HEK293 (cell line): ENCODE measurements at regions of chr11 and their contacts with region 1.

Region 1: GRCh38 chr11:61384271-61385242 is 7.8 kb upstream of the TMEM216 start:
- H3K4me3 ChIP-seq: no peak overlapping the region
- H3K27ac ChIP-seq: no peak overlapping the region
- H3K4me1 ChIP-seq: no peaks in the 10 kb centered on the region
- CTCF ChIP-seq: no peak

Region 2: GRCh38 chr11:61254403-61255025 is 130.0 kb before region 1 on chr11:
- CTCF ChIA-PET with region 1: interaction called, 31 read pairs
- POLR2A ChIA-PET with region 1: no interaction called
- H3K4me3 ChIP-seq: no peak overlapping the region
- H3K27ac ChIP-seq: no peak overlapping the region
- H3K4me1 ChIP-seq: no peaks in the 10 kb centered on the region
- CTCF ChIP-seq: peak; percentile 59

Region 3: DNA sequence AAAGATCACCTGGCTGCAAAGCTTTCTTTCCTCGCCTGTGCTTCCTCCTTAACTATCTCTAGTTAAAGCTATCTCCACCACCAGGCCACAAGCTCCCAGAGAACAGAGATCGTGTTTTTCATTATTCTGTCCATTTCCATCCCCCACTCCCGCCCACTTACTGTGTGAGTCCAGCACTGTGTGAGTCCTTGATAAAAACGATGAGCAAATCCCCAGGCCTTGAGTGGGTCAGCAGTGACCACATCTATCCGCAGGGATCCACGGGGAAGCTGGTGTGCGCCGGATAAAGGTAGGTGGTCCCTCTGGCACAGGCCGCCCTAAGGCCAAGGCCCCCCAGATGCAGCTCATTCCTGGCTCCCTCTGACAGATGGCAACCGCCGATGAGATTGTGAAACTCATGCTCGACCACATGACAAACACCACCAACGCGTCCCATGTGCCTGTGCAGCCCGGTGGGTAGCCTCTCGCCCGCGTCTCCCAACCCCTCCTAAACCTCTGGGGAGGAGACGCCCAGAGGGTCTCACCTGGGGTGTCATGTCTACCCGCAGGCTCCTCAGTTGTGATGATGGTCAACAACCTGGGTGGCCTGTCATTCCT is 42.3 kb before region 1 on chr11:
- CTCF ChIA-PET with region 1: interaction called, 210 read pairs
- POLR2A ChIA-PET with region 1: no interaction called
- H3K4me3 ChIP-seq: no peak overlapping the region
- H3K27ac ChIP-seq: no peak overlapping the region
- H3K4me1 ChIP-seq: no peaks in the 10 kb centered on the region
- CTCF ChIP-seq: no peak

Region 4: GRCh38 chr11:61347916-61348461 is 36.6 kb before region 1 on chr11:
- CTCF ChIA-PET with region 1: interaction called, 12 read pairs
- POLR2A ChIA-PET with region 1: no interaction called
- H3K4me3 ChIP-seq: no peak overlapping the region
- H3K27ac ChIP-seq: no peak overlapping the region
- H3K4me1 ChIP-seq: no peaks in the 10 kb centered on the region
- CTCF ChIP-seq: no peak

Region 5: DNA sequence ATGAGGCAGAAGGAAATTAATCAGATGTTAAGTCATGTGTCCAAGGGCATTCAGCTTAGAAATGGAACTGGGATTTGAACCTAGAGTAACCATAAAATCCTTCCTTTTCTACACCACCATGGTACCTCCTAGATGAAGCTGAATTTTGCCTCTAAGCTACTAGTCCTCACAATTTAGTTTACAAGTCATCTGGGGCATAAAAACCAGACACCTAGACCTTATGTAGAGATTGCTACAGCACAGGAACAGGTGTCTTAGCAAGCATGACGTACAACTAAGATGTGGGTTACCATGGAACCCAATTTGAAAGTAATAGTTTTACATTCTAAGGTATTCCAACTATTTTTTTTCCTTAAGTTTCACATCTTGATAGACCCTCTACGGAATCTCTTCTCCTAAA is 17.0 kb after region 1 on chr11:
- CTCF ChIA-PET with region 1: interaction called, 19 read pairs
- POLR2A ChIA-PET with region 1: no interaction called
- H3K4me3 ChIP-seq: no peak overlapping the region
- H3K27ac ChIP-seq: no peak overlapping the region
- H3K4me1 ChIP-seq: no peaks in the 10 kb centered on the region
- CTCF ChIP-seq: no peak